Left cardiac atrium (tissue), 4 donors: ENCODE measurements at regions of chr20 and their contacts with region 1.

Region 1: GRCh38 chr20:21505161-21505809 is 8.6 kb downstream of the NKX2-2 start:
- DNase-seq: peak; percentile 71
- ATAC-seq: peak; percentile 70 to 76

Region 2: GRCh38 chr20:20837574-20838021 is 667.7 kb before region 1 on chr20:
- intact Hi-C with region 1: loop called in 1 of 2 experiments (anchors 5 kb)
- DNase-seq: peak; percentile 51
- ATAC-seq: peak; percentile 57 to 73

Region 3: DNA sequence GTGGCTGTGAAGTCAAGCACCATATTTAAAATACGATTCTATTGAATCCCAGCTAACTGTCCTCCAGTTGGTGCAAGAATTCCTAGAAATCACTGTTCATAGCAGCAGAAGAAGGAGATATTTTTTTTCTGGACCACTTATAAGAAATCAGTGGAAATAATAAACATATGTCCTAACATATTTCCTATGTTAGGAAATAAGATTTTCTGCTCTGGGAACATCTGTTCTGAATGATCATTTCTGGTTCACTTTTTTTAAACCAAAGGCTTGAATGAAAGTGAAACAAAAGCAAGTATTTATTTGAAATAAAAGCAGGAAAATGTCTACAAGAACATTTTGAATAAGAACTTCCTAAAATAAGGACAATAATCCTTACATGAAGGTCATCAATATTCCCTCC is 653.9 kb before region 1 on chr20:
- intact Hi-C with region 1: loop called (anchors 5 kb)
- DNase-seq: no peak
- ATAC-seq: no peak

Region 4: GRCh38 chr20:20860078-20860806 is 645.0 kb before region 1 on chr20:
- intact Hi-C with region 1: loop called in 1 of 2 experiments (anchors 5 kb)
- DNase-seq: peak; percentile 89
- ATAC-seq: peak; percentile 78 to 92

Region 5: DNA sequence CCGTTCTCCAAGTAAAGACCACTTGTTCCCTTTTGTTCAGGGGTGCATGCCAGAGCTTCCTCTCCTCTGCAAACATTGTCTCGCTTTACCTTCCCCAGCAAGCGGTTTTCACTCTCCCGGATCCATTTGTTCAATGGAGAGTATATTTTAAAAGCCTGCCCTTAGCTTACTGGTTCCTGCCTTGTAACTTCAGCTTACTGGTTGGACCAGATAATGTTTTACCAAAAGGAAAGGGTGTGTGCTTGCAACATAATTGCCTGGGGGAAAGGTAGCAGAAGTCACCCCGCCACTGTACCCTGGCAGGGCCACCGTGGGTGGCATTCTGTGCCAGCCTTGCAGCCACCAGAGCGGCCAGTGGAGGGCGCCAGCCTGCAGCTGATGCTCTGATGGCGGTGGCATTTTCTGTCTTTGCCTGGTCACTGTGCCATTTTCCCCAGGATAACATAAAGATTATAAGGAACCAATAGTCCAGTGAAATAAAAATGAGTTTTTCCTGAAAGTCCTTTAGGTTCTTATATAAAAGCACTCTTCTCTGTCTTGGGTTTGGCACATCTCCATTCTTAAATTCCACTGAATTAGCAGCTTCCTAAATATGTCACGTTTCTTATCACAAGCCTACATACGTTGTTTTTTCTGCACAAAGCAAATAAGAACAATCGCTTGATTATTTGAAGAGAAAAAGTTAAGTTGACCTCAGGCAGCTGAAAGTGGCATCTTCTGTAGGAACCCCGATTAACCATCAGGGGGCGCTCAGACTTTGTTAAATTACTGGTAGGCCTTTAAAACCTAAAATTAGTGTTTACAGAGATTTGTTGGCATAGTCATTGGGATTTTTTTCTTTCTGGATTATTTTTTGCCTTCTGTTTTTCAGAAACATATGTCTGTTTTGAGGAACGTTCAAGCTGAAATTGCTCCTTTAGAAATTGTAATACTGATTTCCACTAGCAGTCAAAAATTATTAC is 269.5 kb before region 1 on chr20:
- intact Hi-C with region 1: loop called (anchors 2 to 5 kb)
- DNase-seq: peak; percentile 54
- ATAC-seq: peak; percentile 57 to 62